Left ventricle myocardium superior (tissue), 1 donor: ENCODE measurements at regions of chr9 and their contacts with region 1.

Region 1: GRCh38 chr9:96317335-96317980 is 15.5 kb upstream of the HSD17B3 start:
- DNase-seq: peak; percentile 73
- ATAC-seq: peak; percentile 67

Region 2: DNA sequence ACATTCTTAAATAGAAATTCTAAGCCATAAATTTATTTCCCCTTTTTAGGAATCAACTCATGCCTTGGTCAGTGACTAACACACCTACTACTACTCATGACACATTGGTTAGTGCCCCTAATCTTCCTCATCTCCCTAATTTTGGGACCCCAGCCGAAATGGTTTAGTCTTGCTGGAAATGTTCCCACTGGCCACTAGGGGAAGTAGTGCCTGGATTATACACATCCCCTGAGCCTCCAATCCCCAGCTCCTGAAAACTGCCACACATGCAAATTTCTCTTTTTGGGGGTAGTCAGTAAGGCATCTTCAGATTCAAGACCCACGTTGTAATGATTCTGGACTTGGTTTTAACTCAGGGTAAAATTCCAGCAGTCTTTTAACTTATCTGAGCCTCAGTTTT is 95.3 kb before region 1 on chr9:
- intact Hi-C with region 1: loop called (anchors 10 kb)
- DNase-seq: no peak
- ATAC-seq: no peak

Region 3: GRCh38 chr9:96344458-96345180 is 27.2 kb after region 1 on chr9:
- intact Hi-C with region 1: no loop called
- DNase-seq: peak; percentile 36
- ATAC-seq: peak; percentile 84

Region 4: GRCh38 chr9:96460882-96461281 is 143.4 kb after region 1 on chr9:
- intact Hi-C with region 1: no loop called
- DNase-seq: no peak
- ATAC-seq: no peak